RWPE1 (cell line): ENCODE measurements at regions of chr17 and their contacts with region 1.

Region 1: GRCh38 chr17:49997791-49998703 is 3.0 kb upstream of the DLX3 start:
- DNase-seq: peak; percentile 89
- H3K27ac ChIP-seq: peak overlapping the region; percentile 68
- CTCF ChIP-seq: peak; percentile 94

Region 2: DNA sequence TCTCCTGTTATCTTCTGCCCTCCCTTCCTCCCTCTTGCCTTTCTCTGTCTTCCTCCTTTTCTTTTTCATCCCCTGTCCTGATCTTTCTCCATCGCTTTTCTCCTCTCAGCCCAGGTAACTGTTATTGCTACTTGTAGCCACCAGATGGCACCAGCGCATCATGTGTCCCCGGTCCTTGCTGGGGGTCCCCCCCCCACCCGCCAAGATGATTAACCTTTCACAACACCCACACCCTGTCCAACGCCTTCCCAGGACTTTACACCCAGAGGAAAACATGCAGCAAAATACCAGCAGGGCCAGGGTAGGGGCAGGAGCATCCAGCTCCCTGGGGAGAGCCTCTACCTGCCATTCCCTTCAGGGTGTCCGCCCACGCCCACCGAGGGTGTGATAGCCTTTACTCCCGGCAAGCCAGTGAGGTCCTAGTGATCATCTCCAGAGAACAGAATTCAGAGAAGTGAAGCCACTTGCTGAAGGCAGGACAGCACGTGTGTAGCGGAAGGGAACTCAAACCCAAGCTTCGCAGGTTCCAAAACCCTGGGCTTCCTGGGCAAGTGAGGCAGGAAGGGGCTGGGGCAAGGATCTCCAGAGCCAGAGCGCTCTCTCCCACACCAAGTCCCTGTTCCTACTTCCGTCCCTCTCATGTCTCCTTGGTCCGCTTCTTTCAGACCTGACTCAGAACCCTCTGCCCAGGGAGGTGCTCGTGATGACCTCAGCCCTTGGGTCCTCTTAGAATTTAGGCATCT is 136.7 kb before region 1 on chr17:
- CTCF ChIA-PET with region 1: interaction called, 77 read pairs
- POLR2A ChIA-PET with region 1: interaction called, 11 read pairs
- DNase-seq: peak; percentile 89
- H3K27ac ChIP-seq: no peak overlapping the region
- CTCF ChIP-seq: peak; percentile 93

Region 3: DNA sequence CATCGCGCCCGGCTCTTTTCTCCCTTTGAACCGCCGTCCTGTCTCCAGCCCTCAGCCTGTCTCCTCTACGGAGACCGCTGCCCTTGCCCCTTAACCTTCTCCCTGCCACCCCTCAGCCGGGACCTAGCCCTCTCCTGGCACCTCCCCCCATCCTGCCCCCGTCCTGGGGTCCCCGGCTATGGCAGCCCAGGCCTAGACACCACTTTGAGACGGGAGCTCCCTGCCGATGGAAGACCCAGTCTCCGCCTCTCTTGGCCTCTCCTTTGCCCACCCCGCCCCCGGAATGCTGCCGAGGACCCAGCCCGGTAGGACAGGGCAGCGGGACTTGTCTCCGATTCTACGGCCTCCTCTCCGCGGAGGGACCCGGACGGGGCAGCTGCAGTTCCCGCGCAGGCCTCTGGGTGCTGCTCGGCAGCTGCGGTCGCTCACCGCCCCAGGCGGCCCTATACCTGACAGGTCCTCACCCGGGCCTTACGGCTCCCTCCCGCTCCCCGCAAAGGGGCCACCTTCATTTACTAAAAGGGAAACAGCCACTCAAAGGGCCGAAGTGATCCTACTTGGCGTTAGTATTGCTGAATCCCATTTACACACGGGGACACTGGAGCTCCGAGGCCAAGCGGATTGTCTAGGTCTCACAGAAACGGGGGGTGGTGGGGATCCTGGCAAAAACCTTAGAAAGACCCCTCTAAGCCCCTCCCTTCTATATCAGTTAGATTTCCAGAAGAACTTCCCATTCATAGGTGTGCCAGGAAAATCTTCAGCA is 117.6 kb before region 1 on chr17:
- CTCF ChIA-PET with region 1: interaction called, 62 read pairs
- POLR2A ChIA-PET with region 1: interaction called, 4 read pairs
- DNase-seq: peak; percentile 91
- H3K27ac ChIP-seq: no peak overlapping the region
- CTCF ChIP-seq: peak; percentile 99

Region 4: GRCh38 chr17:49899191-49899485 is 98.9 kb before region 1 on chr17:
- CTCF ChIA-PET with region 1: interaction called, 13 read pairs
- POLR2A ChIA-PET with region 1: no interaction called
- DNase-seq: no peak
- H3K27ac ChIP-seq: no peak overlapping the region
- CTCF ChIP-seq: no peak

Region 5: DNA sequence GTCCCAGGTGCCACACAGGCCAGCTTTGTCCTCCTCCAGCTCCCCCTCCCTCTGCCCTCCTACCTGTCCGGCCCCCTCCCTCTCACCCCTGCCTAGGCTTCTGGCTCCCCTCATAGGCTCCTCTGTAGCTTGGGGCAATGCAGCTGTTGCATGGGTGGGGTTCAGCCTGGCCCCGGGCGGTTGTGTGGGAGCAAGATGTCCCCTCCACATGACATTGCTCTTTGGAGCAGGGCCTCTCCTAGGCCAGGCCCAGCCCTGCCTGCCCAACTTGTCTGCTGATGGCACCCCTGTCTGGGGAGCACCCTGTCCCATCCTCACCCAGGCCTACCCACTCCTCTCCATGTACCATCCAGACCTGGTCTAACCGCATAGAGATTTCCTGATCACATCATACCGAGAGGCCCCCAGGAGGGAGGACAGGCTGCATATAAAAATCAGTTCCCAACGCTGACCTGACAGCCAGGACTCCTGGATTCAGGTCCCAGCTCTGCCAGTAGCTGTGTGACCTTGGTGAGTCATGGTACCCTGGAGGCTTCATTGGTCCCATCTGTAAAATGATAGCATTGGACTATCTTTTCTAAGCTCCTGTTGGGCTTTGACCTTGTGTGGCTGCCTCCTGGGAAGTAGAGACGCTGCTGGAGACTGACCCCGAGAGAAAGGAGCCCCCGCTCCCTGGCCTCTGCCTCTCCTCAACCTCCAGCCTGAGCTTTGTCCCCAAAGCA is 77.8 kb before region 1 on chr17:
- CTCF ChIA-PET with region 1: interaction called, 14 read pairs
- POLR2A ChIA-PET with region 1: interaction called, 5 read pairs
- DNase-seq: no peak
- H3K27ac ChIP-seq: no peak overlapping the region
- CTCF ChIP-seq: no peak

Region 6: DNA sequence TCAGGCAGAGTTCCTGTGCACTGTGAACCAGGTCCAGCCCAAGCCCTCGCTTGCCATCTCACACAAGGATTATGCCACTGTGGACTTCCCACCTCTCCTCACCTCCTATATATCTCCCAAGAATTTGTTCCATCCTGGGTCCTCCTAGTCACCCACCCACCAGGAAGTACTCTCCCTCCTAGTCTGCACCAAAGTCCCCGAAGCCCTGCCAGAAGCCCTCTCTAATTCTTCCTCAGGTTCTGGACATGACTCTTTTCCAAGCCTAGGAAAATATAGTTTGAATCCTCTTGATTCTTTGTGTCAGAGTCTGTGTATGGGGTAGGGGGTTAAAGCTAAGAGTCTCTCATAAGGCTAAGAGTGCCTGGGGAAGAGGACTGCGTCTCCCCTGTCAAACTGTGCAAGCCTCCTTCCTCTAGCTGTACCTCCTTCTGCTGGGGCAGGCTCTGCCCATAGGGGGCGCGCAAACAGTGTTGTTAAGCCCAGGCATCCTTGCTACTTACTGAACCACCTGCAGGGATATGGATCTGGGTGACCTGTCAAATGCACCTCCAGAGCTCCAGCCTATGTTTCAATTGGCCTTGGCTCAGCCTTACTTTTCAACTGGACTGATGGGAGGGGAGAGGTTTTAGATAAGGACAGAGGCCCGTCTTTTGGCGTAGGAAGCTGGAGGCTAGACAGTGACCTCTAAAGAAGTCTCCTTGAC is 45.7 kb before region 1 on chr17:
- CTCF ChIA-PET with region 1: interaction called, 58 read pairs
- POLR2A ChIA-PET with region 1: interaction called, 4 read pairs
- DNase-seq: peak; percentile 84
- H3K27ac ChIP-seq: no peak overlapping the region
- CTCF ChIP-seq: peak; percentile 97

Region 7: DNA sequence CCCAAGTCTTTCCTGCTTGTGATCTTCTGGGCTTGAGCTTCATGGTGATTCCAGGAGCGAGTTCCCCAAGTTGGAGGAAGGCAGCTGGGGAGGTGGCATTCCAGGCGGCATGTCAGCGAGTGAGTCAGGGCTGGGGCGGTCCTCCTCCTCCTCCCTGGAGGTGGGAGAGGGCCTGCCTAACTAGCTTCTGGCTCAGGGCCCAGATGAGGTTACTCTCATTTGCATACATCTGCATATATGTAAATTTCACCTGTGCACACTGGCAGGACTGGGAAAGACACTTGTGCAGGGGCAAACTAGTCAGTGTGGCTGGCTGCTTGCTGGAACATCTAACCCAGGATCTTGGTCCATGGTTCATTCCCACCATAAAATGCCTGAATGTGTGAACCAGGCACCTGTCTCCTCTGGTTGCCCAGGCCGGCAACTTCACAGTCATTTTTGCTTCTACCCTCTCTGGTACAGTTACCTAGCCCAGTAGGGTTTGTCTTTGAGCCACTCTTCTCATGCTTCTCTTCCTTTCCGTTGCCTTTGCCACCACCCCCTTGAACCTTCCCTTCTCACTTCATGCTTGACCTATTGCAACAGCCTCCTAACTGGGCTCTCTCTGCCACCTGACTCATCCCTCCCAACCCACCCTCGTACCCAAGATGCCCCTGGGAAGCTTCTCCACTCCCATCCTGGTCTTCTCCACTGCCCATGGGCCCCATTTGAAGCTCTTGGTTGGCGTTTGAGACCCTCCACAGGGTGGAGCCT is 38.7 kb before region 1 on chr17:
- CTCF ChIA-PET with region 1: interaction called, 58 read pairs
- POLR2A ChIA-PET with region 1: no interaction called
- DNase-seq: peak; percentile 52
- H3K27ac ChIP-seq: no peak overlapping the region
- CTCF ChIP-seq: no peak

Region 8: GRCh38 chr17:50026901-50027630 is 29.0 kb after region 1 on chr17:
- CTCF ChIA-PET with region 1: no interaction called
- POLR2A ChIA-PET with region 1: no interaction called
- DNase-seq: peak; percentile 82
- H3K27ac ChIP-seq: peak overlapping the region; percentile 100
- CTCF ChIP-seq: peak; percentile 98

Region 9: DNA sequence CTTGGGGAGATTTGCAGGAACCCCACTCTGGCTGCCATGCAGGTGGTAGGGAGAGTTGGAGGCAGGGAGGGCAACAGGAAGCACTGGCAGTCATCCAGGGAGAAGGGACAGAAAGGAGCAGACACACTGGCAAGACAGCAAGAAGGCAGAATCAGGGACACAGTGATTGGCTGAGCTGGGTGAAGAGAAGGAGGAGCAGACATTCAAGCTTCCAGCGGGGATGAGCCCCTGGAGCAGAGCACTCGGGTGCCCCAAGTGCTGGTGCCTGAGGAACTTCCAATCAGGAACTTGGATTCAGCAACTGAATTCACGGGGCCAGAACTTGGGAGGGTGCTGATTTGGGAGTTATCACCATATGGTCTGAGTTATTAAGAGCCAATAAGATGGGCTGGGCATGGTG is 51.6 kb after region 1 on chr17:
- CTCF ChIA-PET with region 1: no interaction called
- POLR2A ChIA-PET with region 1: no interaction called
- DNase-seq: no peak
- H3K27ac ChIP-seq: peak overlapping the region; percentile 100
- CTCF ChIP-seq: no peak

Region 10: DNA sequence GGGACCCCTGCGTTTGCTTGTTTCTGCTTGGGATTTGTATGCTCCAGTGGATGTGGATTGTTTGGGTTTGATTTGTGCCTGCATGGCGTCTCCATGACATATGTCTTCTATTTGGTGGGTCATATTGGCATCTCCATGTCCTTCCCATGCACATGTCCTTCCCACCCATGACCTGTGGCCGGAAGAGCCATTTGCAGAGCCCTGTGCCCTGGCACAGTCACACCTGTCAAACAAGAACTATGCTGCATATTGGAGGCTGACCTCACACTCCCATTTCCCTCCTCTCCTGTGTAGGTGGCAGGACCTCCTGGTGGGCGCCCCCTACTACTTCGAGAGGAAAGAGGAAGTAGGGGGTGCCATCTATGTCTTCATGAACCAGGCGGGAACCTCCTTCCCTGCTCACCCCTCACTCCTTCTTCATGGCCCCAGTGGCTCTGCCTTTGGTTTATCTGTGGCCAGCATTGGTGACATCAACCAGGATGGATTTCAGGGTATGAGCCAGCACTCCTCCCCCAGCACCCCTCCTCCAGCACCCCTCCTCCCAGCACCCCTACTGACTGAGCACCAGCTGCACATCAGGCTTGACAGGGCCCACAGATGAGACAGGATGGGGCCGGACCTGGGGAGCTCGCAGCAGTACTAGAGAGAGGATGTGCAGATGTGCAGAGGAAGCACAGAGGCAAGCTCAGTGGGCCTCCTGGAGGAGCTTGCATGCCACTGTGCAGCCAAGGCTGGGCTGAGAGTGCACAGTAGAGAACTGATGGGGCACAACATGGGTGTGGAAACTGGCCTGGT is 73.8 kb after region 1 on chr17:
- CTCF ChIA-PET with region 1: no interaction called
- POLR2A ChIA-PET with region 1: no interaction called
- DNase-seq: no peak
- H3K27ac ChIP-seq: peak overlapping the region; percentile 75
- CTCF ChIP-seq: no peak